IMR-90 (cell line): ENCODE measurements at regions of chr5 and their contacts with region 1.

Region 1: DNA sequence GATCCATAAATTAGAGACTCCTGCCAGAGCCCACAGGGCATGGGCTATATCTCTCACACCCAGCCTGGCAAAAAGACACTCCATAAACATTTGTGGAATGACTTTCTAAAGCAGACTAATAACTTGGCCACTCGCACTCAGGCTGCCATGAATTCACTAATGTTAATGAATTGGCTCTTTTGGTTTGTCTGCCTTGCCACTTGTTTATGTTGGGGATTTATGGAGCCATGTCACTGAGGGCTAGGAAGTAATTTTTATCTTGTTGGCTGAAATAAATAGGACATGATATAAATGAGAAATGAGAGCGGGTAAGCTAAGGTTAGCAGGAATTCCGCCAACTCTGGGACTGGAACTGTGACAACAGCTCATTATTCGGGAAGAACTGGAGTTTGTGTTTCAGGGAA is 55.2 kb downstream of the DROSHA start:
- DNase-seq: no peak
- ATAC-seq: no peak
- H3K4me3 ChIP-seq: no peak overlapping the region
- H3K27ac ChIP-seq: peak overlapping the region; percentile 56; the same call in 1 of the 2 replicates
- H3K4me1 ChIP-seq: peaks cover 15% of the 10 kb centered on the region
- H3K27me3 ChIP-seq: no peaks in the 10 kb centered on the region
- CTCF ChIP-seq: no peak
- POLR2A ChIP-seq: no peak
- RAD21 ChIP-seq: no peak

Region 2: GRCh38 chr5:31361234-31361633 is 115.5 kb before region 1 on chr5:
- CTCF ChIA-PET with region 1: no interaction called
- POLR2A ChIA-PET with region 1: interaction called, 3 read pairs
- dilution Hi-C with region 1: no loop called
- in situ Hi-C with region 1: no loop called
- intact Hi-C with region 1: loop called (anchors 5 kb)
- DNase-seq: peak; percentile 76
- ATAC-seq: no peak; the same call in 1 of the 2 replicates
- H3K4me3 ChIP-seq: no peak overlapping the region
- H3K27ac ChIP-seq: peak overlapping the region; percentile 89
- H3K4me1 ChIP-seq: peaks cover 30% of the 10 kb centered on the region
- H3K27me3 ChIP-seq: no peaks in the 10 kb centered on the region
- CTCF ChIP-seq: no peak
- POLR2A ChIP-seq: no peak
- RAD21 ChIP-seq: no peak

Region 3: GRCh38 chr5:31442058-31442745 is 34.5 kb before region 1 on chr5:
- CTCF ChIA-PET with region 1: no interaction called
- POLR2A ChIA-PET with region 1: no interaction called
- dilution Hi-C with region 1: no loop called
- in situ Hi-C with region 1: no loop called
- intact Hi-C with region 1: loop called (anchors 2 kb)
- DNase-seq: peak; percentile 50
- ATAC-seq: peak; percentile 83
- H3K4me3 ChIP-seq: no peak overlapping the region
- H3K27ac ChIP-seq: peak overlapping the region; percentile 68
- H3K4me1 ChIP-seq: peaks cover 3% of the 10 kb centered on the region
- H3K27me3 ChIP-seq: no peaks in the 10 kb centered on the region
- CTCF ChIP-seq: no peak
- POLR2A ChIP-seq: no peak
- RAD21 ChIP-seq: no peak

Region 4: GRCh38 chr5:31487506-31487905 is 10.8 kb after region 1 on chr5:
- CTCF ChIA-PET with region 1: no interaction called
- POLR2A ChIA-PET with region 1: no interaction called
- dilution Hi-C with region 1: no loop called
- in situ Hi-C with region 1: no loop called
- intact Hi-C with region 1: no loop called
- DNase-seq: peak; percentile 11
- ATAC-seq: no peak
- H3K4me3 ChIP-seq: no peak overlapping the region
- H3K27ac ChIP-seq: no peak overlapping the region
- H3K4me1 ChIP-seq: peaks cover 4% of the 10 kb centered on the region; the same call in 1 of the 2 replicates
- H3K27me3 ChIP-seq: no peaks in the 10 kb centered on the region
- CTCF ChIP-seq: peak; percentile 47
- POLR2A ChIP-seq: no peak
- RAD21 ChIP-seq: peak; percentile 53

Region 5: DNA sequence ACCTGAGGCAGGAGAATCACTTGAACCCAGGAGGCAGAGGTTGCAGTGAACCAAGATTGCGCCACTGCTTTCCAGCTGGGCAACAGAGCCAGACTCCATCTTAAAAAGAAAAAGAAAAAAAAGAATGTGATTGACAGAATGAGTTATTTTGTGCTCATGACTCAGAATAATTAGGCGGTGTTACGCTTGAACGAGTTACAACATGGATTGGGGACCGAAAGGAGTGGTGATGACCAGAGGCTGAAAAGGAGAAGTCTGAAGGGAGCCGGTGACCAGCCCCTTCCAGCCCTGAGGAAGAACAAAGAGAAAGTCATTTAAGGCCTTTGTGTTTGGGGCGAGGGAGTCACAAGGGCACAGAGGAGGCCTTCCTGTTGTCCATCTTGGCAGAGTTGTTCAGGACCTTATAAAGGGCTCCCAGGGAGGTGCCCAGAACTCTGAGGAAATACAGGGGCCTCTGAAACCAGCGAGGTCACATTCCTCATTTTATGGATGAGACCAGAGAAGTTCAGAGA is 565.8 kb after region 1 on chr5:
- CTCF ChIA-PET with region 1: no interaction called
- POLR2A ChIA-PET with region 1: no interaction called
- dilution Hi-C with region 1: no loop called
- in situ Hi-C with region 1: no loop called
- intact Hi-C with region 1: no loop called
- DNase-seq: no peak
- ATAC-seq: no peak
- H3K4me3 ChIP-seq: no peak overlapping the region
- H3K27ac ChIP-seq: no peak overlapping the region
- H3K4me1 ChIP-seq: no peaks in the 10 kb centered on the region; the same call in 1 of the 2 replicates
- H3K27me3 ChIP-seq: peaks cover 17% of the 10 kb centered on the region
- CTCF ChIP-seq: no peak
- POLR2A ChIP-seq: no peak
- RAD21 ChIP-seq: no peak

Region 6: GRCh38 chr5:32413466-32414263 is 936.9 kb after region 1 on chr5:
- CTCF ChIA-PET with region 1: no interaction called
- POLR2A ChIA-PET with region 1: no interaction called
- dilution Hi-C with region 1: no loop called
- in situ Hi-C with region 1: no loop called
- intact Hi-C with region 1: no loop called
- DNase-seq: no peak
- ATAC-seq: no peak
- H3K4me3 ChIP-seq: no peak overlapping the region
- H3K27ac ChIP-seq: no peak overlapping the region
- H3K4me1 ChIP-seq: no peaks in the 10 kb centered on the region
- H3K27me3 ChIP-seq: no peaks in the 10 kb centered on the region
- CTCF ChIP-seq: no peak
- POLR2A ChIP-seq: no peak
- RAD21 ChIP-seq: no peak